ENCODE measurements at regions of chr2 and their contacts with region 1.

Region 1: DNA sequence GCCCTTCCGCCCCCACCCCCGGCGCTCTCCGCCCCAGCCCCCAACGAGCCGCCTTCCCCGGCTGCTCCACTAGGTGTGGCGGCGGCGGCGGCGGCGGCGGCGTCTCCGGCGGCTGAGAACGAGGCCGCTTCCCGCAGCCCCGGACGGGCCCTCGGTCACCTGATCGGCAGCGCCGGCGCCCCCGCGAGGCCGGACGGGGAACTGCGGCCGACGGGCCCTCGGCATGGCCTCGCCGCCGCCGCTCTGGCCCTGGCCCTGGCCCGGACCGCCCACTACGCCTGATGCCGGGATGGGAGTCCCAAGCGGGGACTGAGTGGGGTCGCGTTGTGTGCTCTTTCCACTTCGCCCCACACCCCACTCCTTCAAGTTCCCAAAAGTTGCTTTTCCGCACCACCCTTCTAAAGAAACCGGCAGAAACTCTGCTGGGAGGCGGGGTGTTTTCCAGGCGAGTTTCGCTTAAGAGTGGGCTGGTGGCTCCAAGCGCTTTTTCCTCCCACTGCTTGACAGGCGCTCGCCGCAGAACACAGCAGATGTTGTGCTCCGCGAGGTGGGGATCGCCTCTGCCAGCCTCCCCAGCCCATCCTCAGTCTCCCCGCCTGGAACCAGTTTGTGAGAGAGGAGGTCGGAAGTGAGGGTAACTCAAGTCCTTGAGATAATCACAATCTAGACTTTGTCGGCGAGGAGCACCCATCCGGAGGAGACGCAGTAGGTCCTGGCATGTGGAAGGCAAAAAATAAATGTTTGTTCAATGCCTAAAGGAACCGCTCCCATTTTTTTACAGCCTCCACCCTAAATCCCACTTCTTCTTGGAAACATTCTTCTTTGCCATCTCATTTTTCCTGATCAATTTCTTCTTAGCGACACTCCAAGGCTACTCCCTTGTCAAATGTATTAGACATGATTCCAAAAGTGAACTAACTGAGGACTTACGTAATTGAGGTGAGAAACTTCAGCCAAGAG is at the start of gene NCKAP1:
- DNase-seq: peak; percentile 92 to 96 (median 93)
- ATAC-seq: peak; percentile 78 to 94 (median 92)
- H3K4me3 ChIP-seq: peak within 1 kb of the TSS; percentile 74 to 92 (median 87)
- H3K27ac ChIP-seq: peak within 1 kb of the TSS; percentile 94 to 99 (median 98)
- H3K4me1 ChIP-seq: peaks cover 13 to 51% (median 34%) of the 10 kb centered on the region in 12 donors
- H3K27me3 ChIP-seq: peaks cover 0 to 86% (median 0%) of the 10 kb centered on the region in 9 donors
- CTCF ChIP-seq: peak; percentile 46 to 99 (median 94)
- POLR2A ChIP-seq: no peak
- total RNA-seq, gene NCKAP1: 113 to 164 (median 138) TPM

Region 2: GRCh38 chr2:182852084-182852483 is 186.5 kb before region 1 on chr2:
- intact Hi-C with region 1: no loop called
- DNase-seq: peak in 2 of 5 donors; percentile 26 to 38
- ATAC-seq: peak in 1 of 4 donors; percentile 28
- H3K4me3 ChIP-seq: no peak overlapping the region
- H3K27ac ChIP-seq: peak overlapping the region in 5 of 12 donors; percentile 1 to 25 (median 11)
- H3K4me1 ChIP-seq: peaks cover 0 to 9% (median 0%) of the 10 kb centered on the region in 12 donors
- H3K27me3 ChIP-seq: no peaks in the 10 kb centered on the region
- CTCF ChIP-seq: no peak
- POLR2A ChIP-seq: no peak

Region 3: DNA sequence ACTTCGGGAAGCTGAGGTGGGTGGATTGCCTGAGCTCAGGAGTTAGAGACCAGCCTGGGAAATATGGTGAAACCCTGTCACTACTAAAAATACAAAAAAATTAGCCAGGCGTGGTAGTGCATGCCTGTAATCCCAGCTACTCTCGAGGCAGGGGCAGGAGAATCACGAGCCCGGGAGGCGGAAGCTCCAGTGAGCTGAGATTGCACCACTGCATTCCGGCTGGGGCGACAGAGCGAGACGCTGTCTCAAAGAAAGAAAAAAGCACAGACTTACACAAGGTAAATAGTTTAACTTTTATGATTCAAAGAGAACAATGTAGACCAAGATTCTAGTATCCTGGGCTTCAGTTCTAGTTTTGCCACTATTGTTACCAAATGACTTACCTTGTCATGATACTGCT is 37.8 kb before region 1 on chr2:
- intact Hi-C with region 1: loop called in 1 of 10 experiments (anchors 5 kb)
- DNase-seq: peak in 1 of 5 donors; percentile 26
- ATAC-seq: peak in 2 of 4 donors; percentile 42 to 62
- H3K4me3 ChIP-seq: no peak overlapping the region
- H3K27ac ChIP-seq: no peak overlapping the region
- H3K4me1 ChIP-seq: peaks cover 0 to 30% (median 0%) of the 10 kb centered on the region in 12 donors
- H3K27me3 ChIP-seq: no peaks in the 10 kb centered on the region
- CTCF ChIP-seq: no peak
- POLR2A ChIP-seq: no peak

Region 4: DNA sequence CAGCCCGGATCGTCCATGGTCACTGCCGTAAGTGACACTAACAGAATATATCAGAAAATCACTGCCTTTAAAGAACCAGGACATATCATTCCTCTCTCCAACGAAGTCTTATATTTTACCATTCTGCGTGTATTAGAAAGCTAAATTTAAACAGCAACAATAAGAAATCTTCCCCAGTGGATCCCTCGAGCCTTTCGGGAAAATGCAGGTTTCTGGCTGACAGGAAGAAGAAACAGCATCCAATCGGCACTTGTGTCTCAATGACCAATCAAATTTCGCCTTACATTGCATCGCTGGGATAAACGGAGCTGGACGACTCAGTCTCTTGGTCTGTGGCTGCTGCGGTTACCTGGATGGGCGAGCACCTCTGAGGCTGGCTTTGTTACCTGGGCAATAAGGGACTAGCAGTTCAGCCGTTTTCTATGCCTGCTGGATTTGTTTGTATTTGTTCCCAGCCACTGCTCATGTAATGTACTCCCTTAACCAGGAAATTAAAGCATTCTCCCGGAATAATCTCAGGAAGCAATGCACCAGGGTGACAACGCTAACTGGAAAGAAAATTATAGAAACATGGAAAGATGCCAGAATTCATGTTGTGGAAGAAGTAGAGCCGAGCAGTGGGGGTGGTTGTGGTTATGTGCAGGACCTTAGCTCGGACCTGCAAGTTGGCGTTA is 40.0 kb after region 1 on chr2 and contains the start of gene DUSP19:
- intact Hi-C with region 1: loop called in 5 of 10 experiments (anchors 1 to 5 kb)
- DNase-seq: peak; percentile 73 to 90 (median 84)
- ATAC-seq: peak; percentile 90 to 95 (median 93)
- H3K4me3 ChIP-seq: peak within 1 kb of the TSS; percentile 33 to 87 (median 70)
- H3K27ac ChIP-seq: peak within 1 kb of the TSS; percentile 64 to 95 (median 88)
- H3K4me1 ChIP-seq: peaks cover 0 to 29% (median 9%) of the 10 kb centered on the region in 12 donors
- H3K27me3 ChIP-seq: peaks cover 0 to 13% (median 0%) of the 10 kb centered on the region in 9 donors
- CTCF ChIP-seq: no peak
- POLR2A ChIP-seq: peak in 1 of 2 donors; percentile 88
- total RNA-seq, gene DUSP19: 4.2 to 13.4 (median 9.3) TPM

Region 5: GRCh38 chr2:183124222-183124956 is 85.8 kb after region 1 on chr2 and contains the start of gene NUP35:
- intact Hi-C with region 1: loop called in 2 of 10 experiments (anchors 5 to 10 kb)
- DNase-seq: peak; percentile 81 to 86 (median 83)
- ATAC-seq: peak; percentile 97 to 99 (median 98)
- H3K4me3 ChIP-seq: peak within 1 kb of the TSS; percentile 67 to 91 (median 77)
- H3K27ac ChIP-seq: peak within 1 kb of the TSS; percentile 11 to 88 (median 78)
- H3K4me1 ChIP-seq: peaks cover 0 to 25% (median 11%) of the 10 kb centered on the region in 12 donors
- H3K27me3 ChIP-seq: no peaks in the 10 kb centered on the region
- CTCF ChIP-seq: no peak
- POLR2A ChIP-seq: no peak
- total RNA-seq, gene NUP35: 6.2 to 10.4 (median 8.0) TPM

Region 6: DNA sequence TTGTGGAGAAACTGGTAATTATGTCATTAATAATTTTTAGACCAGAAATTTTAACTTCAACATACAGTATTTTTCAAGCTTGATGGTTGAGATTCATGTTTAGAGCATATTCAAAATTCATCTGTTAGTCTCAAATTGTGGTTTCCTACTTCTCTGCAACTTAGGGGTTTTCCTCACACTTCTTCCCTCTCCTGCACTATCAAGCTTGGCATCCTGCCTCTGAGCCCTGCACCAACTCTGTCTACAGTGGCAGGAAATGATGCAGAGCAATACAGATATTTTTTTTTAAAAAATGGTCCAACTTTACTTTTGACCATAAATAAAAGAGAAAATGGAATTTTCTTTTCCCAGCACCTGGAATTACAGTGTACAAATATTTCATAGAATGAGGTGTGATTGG is 332.9 kb after region 1 on chr2:
- intact Hi-C with region 1: no loop called
- DNase-seq: no peak
- ATAC-seq: no peak
- H3K4me3 ChIP-seq: no peak overlapping the region
- H3K27ac ChIP-seq: no peak overlapping the region
- H3K4me1 ChIP-seq: no peaks in the 10 kb centered on the region
- H3K27me3 ChIP-seq: no peaks in the 10 kb centered on the region
- CTCF ChIP-seq: no peak
- POLR2A ChIP-seq: no peak

Region 7: GRCh38 chr2:183389546-183390080 is 351.0 kb after region 1 on chr2:
- intact Hi-C with region 1: no loop called
- DNase-seq: peak in 1 of 5 donors; percentile 5
- ATAC-seq: no peak
- H3K4me3 ChIP-seq: no peak overlapping the region
- H3K27ac ChIP-seq: no peak overlapping the region
- H3K4me1 ChIP-seq: no peaks in the 10 kb centered on the region
- H3K27me3 ChIP-seq: no peaks in the 10 kb centered on the region
- CTCF ChIP-seq: no peak
- POLR2A ChIP-seq: no peak